ENCODE measurements at regions of chr19 and their contacts with region 1.

Region 1: GRCh38 chr19:39970675-39971379 is at the start of gene PSMC4:
- DNase-seq: peak; percentile 96 to 99 (median 98)
- ATAC-seq: peak; percentile 95 to 98 (median 96)
- H3K4me3 ChIP-seq: peak within 1 kb of the TSS; percentile 84 to 99
- H3K4me3 Mint-ChIP-seq: peak within 1 kb of the TSS; percentile 98 to 100 (median 98)
- H3K27ac ChIP-seq: peak within 1 kb of the TSS; percentile 90
- H3K27ac Mint-ChIP-seq: peak within 1 kb of the TSS; percentile 95 to 98
- H3K4me1 ChIP-seq: peaks cover 11 to 50% of the 10 kb centered on the region in 2 experiments
- H3K4me1 Mint-ChIP-seq: peaks cover 53 to 62% (median 59%) of the 10 kb centered on the region in 3 donors
- H3K27me3 ChIP-seq: no peaks in the 10 kb centered on the region
- H3K27me3 Mint-ChIP-seq: no peaks in the 10 kb centered on the region
- total RNA-seq, gene PSMC4: 58.5 to 80.0 (median 59.6) TPM

Region 2: DNA sequence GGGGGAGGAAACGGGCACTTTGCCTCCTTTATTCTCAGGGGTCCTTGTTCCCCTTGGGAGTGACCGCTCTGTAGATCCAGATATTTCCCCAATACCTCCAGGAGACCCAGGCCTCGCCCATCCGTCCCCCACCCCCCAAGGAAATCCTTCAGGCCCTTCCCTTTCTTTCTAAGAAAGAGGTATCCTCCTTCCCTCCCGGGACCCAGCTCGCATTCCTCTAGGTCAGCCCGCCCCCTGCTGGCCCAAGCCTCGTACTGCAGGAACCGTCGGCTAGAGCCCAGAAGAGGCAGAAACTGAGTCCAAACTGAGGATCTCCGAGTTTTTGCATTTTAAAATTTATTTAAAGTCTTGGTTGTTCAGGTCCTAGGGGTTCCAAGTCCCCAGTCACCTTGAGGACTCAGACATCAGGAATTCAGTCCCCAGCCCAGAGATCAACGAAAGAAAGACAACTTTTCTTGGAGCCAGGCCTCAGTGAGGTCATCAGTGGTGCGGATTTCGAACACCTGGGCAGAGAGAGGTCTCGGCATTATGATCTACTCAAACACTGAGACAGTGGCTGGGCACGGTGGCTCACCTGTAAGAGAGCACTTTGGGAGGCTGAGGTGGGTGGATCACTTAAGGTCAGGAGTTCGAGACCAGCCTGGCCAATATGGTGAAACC is 642.7 kb before region 1 on chr19:
- CTCF ChIA-PET with region 1: no interaction called
- POLR2A ChIA-PET with region 1: no interaction called
- DNase-seq: peak; percentile 41 to 87 (median 76)
- ATAC-seq: peak; percentile 65 to 78 (median 72)
- H3K4me3 ChIP-seq: no peak overlapping the region
- H3K4me3 Mint-ChIP-seq: peak overlapping the region; percentile 21 to 42 (median 24)
- H3K27ac ChIP-seq: no peak overlapping the region
- H3K27ac Mint-ChIP-seq: peak overlapping the region; percentile 74 to 82
- H3K4me1 ChIP-seq: peaks cover 10 to 61% of the 10 kb centered on the region in 2 experiments
- H3K4me1 Mint-ChIP-seq: peaks cover 39 to 55% (median 53%) of the 10 kb centered on the region in 3 donors
- H3K27me3 ChIP-seq: no peaks in the 10 kb centered on the region
- H3K27me3 Mint-ChIP-seq: no peaks in the 10 kb centered on the region

Region 3: GRCh38 chr19:39833464-39834286 is 137.2 kb before region 1 on chr19 and contains the start of gene DYRK1B:
- CTCF ChIA-PET with region 1: interaction called in 1 of 2 experiments, 11 read pairs
- POLR2A ChIA-PET with region 1: interaction called in 1 of 2 experiments, 9 read pairs
- DNase-seq: peak; percentile 95 to 99 (median 97)
- ATAC-seq: peak; percentile 91 to 93 (median 92)
- H3K4me3 ChIP-seq: peak within 1 kb of the TSS; percentile 76 to 99
- H3K4me3 Mint-ChIP-seq: peak within 1 kb of the TSS; percentile 75 to 84 (median 81)
- H3K27ac ChIP-seq: peak within 1 kb of the TSS; percentile 92
- H3K27ac Mint-ChIP-seq: peak within 1 kb of the TSS; percentile 85 to 92
- H3K4me1 ChIP-seq: peaks cover 11 to 44% of the 10 kb centered on the region in 2 experiments
- H3K4me1 Mint-ChIP-seq: peaks cover 30 to 36% (median 30%) of the 10 kb centered on the region in 3 donors
- H3K27me3 ChIP-seq: no peaks in the 10 kb centered on the region
- H3K27me3 Mint-ChIP-seq: no peaks in the 10 kb centered on the region
- total RNA-seq, gene DYRK1B: 18.9 to 38.4 (median 28.0) TPM

Region 4: DNA sequence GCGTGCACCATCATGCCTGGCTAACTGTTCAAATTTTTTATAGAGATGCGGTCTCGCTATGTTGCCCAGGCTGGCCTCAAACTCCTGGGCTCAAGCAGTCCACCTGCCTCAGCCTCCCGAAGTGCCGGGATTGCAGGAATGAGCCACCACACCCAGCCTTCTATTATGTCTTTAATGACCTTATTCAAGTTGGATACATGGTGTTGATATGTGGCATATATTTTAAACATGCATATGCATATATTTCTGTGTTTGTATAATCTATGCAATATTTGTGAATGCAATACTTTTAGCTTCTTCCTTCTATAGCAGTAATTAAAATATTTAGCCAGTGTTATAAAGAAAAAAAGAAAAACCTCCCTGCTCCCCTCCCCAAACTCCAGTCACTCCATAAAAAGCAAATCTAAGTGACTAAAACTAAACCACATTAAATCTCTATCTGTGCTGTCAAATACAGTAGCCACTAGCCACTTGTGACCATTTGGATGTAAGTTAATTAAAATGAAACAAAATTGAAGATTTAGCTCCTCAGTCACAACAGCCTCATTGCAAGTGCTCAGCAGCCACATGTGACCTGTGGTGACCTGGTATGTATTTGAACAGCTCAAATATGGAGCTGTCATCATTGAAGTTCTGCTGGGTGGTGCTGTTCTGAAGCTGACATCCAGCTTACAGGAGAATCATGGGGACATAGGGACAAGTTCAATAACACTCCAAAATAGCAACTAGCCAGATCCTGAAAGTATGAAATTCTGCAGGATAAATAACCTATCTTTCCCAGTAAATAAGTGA is 63.8 kb before region 1 on chr19:
- CTCF ChIA-PET with region 1: interaction called in 1 of 2 experiments, 10 read pairs
- POLR2A ChIA-PET with region 1: no interaction called
- DNase-seq: no peak
- ATAC-seq: no peak
- H3K4me3 ChIP-seq: no peak overlapping the region
- H3K4me3 Mint-ChIP-seq: no peak overlapping the region
- H3K27ac ChIP-seq: no peak overlapping the region
- H3K27ac Mint-ChIP-seq: peak overlapping the region in 1 of 2 donors; percentile 41
- H3K4me1 ChIP-seq: peaks cover 0 to 2% of the 10 kb centered on the region in 2 experiments
- H3K4me1 Mint-ChIP-seq: peaks cover 12 to 21% (median 21%) of the 10 kb centered on the region in 3 donors
- H3K27me3 ChIP-seq: no peaks in the 10 kb centered on the region
- H3K27me3 Mint-ChIP-seq: no peaks in the 10 kb centered on the region

Region 5: GRCh38 chr19:39953915-39954314 is 16.9 kb before region 1 on chr19:
- CTCF ChIA-PET with region 1: interaction called, 7 to 19 read pairs
- POLR2A ChIA-PET with region 1: interaction called, 8 to 13 read pairs
- DNase-seq: peak in 1 of 35 experiments; percentile 42
- ATAC-seq: peak; percentile 15 to 40 (median 35)
- H3K4me3 ChIP-seq: no peak overlapping the region
- H3K4me3 Mint-ChIP-seq: peak overlapping the region; percentile 62 to 94 (median 79)
- H3K27ac ChIP-seq: peak overlapping the region; percentile 92
- H3K27ac Mint-ChIP-seq: peak overlapping the region; percentile 99
- H3K4me1 ChIP-seq: peaks cover 60 to 64% of the 10 kb centered on the region in 2 experiments
- H3K4me1 Mint-ChIP-seq: peaks cover 70 to 81% (median 78%) of the 10 kb centered on the region in 3 donors
- H3K27me3 ChIP-seq: no peaks in the 10 kb centered on the region
- H3K27me3 Mint-ChIP-seq: no peaks in the 10 kb centered on the region

Region 6: GRCh38 chr19:39996811-39997594 is 26.2 kb after region 1 on chr19 and contains the start of gene ZNF546:
- CTCF ChIA-PET with region 1: interaction called in 1 of 2 experiments, 20 read pairs
- POLR2A ChIA-PET with region 1: no interaction called
- DNase-seq: peak; percentile 75 to 93 (median 87)
- ATAC-seq: peak; percentile 96
- H3K4me3 ChIP-seq: peak within 1 kb of the TSS; percentile 86 to 88
- H3K4me3 Mint-ChIP-seq: peak within 1 kb of the TSS; percentile 87 to 99 (median 96)
- H3K27ac ChIP-seq: peak within 1 kb of the TSS; percentile 82
- H3K27ac Mint-ChIP-seq: peak within 1 kb of the TSS; percentile 91 to 95
- H3K4me1 ChIP-seq: peaks cover 12 to 26% of the 10 kb centered on the region in 2 experiments
- H3K4me1 Mint-ChIP-seq: peaks cover 44 to 48% (median 44%) of the 10 kb centered on the region in 3 donors
- H3K27me3 ChIP-seq: no peaks in the 10 kb centered on the region
- H3K27me3 Mint-ChIP-seq: no peaks in the 10 kb centered on the region
- total RNA-seq, gene ZNF546: 5.9 to 18.0 (median 12.9) TPM

Region 7: DNA sequence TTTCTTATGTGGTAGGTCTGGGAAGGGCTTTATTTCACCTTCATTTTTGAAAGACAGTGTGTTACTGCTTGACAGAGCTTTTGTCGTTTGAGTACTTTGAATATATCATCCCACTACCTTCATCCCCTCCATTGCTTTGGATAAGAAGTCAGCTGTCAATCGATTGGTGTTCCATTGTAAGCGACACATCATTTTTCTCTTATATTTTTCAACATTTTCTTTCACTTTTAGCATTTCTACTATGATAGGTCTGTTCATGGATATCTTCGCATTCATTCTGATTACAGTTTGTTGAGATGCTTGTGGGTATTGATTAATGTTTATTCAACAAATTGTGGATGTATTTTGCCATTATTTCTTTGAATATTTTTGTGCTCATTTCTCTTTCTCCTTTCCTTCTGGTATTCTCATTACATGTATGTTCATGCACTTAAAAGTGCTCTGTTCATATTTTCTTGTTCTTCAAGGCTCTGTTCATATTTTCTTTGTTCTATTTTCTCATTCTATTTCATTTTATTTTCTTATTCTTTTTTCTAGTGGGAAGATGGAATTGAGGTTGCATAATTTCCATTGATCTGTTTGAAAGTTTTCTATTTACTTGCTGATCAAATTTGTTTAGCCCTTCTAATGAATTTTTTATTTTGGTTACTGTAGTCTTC is 55.2 kb after region 1 on chr19:
- CTCF ChIA-PET with region 1: no interaction called
- POLR2A ChIA-PET with region 1: no interaction called
- DNase-seq: no peak
- ATAC-seq: no peak
- H3K4me3 ChIP-seq: no peak overlapping the region
- H3K4me3 Mint-ChIP-seq: no peak overlapping the region
- H3K27ac ChIP-seq: no peak overlapping the region
- H3K27ac Mint-ChIP-seq: no peak overlapping the region
- H3K4me1 ChIP-seq: no peaks in the 10 kb centered on the region
- H3K4me1 Mint-ChIP-seq: no peaks in the 10 kb centered on the region
- H3K27me3 ChIP-seq: no peaks in the 10 kb centered on the region
- H3K27me3 Mint-ChIP-seq: no peaks in the 10 kb centered on the region

Measured in T-cell (primary cell).